Activated CD4-positive, alpha-beta T cell treated with anti-CD3 and anti-CD28 coated beads for 36 hours (primary cell): ENCODE measurements at regions of chr1 and their contacts with region 1.

Region 1: GRCh38 chr1:185987611-185988321 is 253.6 kb downstream of the HMCN1 start:
- DNase-seq: peak; percentile 22
- ATAC-seq: peak; percentile 93
- H3K4me3 Mint-ChIP-seq: peak overlapping the region; percentile 52
- H3K27ac Mint-ChIP-seq: peak overlapping the region; percentile 95
- H3K4me1 Mint-ChIP-seq: peaks cover 15% of the 10 kb centered on the region
- H3K27me3 Mint-ChIP-seq: no peaks in the 10 kb centered on the region

Region 2: DNA sequence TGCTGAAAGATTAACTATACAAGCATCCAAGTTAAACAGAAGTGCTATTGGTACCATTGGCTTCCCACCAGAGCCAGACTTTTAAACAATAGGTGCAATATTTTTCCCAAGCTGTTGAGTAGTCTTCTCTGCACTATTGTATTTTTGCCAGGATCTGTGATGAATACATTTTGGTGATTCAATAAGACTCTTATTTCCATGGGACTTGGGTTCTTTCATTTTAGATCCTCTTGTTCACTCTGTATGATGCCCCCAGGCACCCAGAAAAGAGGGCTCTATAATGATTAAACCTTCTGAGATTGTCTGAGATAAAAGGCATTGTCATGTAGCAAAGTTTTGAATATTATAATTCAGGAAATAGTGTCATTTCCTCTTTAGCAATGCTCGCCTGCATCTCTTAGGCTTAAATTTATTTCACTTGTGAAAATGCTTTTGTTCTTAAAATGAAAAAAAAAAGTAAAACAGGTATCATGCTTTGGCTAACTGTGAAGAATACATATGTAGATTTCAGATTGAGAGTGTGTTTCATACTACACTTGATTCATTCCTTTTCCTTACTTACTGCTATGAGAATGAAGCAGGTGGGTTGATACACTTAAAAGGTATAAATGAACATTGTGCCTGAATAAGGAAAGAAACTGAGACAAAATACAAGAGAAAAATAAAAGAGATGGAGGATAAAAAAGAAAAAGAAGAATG is 21.4 kb after region 1 on chr1:
- CTCF ChIA-PET with region 1: interaction called, 5 read pairs
- POLR2A ChIA-PET with region 1: no interaction called
- intact Hi-C with region 1: loop called (anchors 1 kb)
- DNase-seq: no peak
- ATAC-seq: peak; percentile 89
- H3K4me3 Mint-ChIP-seq: no peak overlapping the region
- H3K27ac Mint-ChIP-seq: peak overlapping the region; percentile 22
- H3K4me1 Mint-ChIP-seq: peaks cover 12% of the 10 kb centered on the region
- H3K27me3 Mint-ChIP-seq: peaks cover 2% of the 10 kb centered on the region

Region 3: GRCh38 chr1:186325239-186325638 is 337.5 kb after region 1 on chr1:
- CTCF ChIA-PET with region 1: no interaction called
- POLR2A ChIA-PET with region 1: no interaction called
- intact Hi-C with region 1: no loop called
- DNase-seq: no peak
- ATAC-seq: no peak
- H3K4me3 Mint-ChIP-seq: no peak overlapping the region
- H3K27ac Mint-ChIP-seq: no peak overlapping the region
- H3K4me1 Mint-ChIP-seq: peaks cover 14% of the 10 kb centered on the region
- H3K27me3 Mint-ChIP-seq: no peaks in the 10 kb centered on the region